ENCODE measurements at regions of chr19 and their contacts with region 1.

Region 1: GRCh38 chr19:17859533-17860330 is at the start of gene RPL18A:
- DNase-seq: peak; percentile 100
- H3K4me3 ChIP-seq: peak within 1 kb of the TSS; percentile 77 to 99 (median 86)
- H3K27ac ChIP-seq: peak within 1 kb of the TSS; percentile 85 to 95 (median 90)
- H3K4me1 ChIP-seq: peaks cover 19 to 39% (median 30%) of the 10 kb centered on the region in 4 donors
- H3K27me3 ChIP-seq: no peaks in the 10 kb centered on the region
- CTCF ChIP-seq: peak; percentile 86 to 95 (median 87)
- EP300 ChIP-seq: no peak
- POLR2A ChIP-seq: peak; percentile 99
- total RNA-seq, gene RPL18A: 1,042 to 1,624 (median 1,374) TPM

Region 2: GRCh38 chr19:17703824-17704463 is 155.8 kb before region 1 on chr19:
- intact Hi-C with region 1: loop called (anchors 10 kb)
- DNase-seq: no peak
- H3K4me3 ChIP-seq: no peak overlapping the region
- H3K27ac ChIP-seq: no peak overlapping the region
- H3K4me1 ChIP-seq: no peaks in the 10 kb centered on the region
- H3K27me3 ChIP-seq: peaks cover 0 to 79% (median 0%) of the 10 kb centered on the region in 4 donors
- CTCF ChIP-seq: peak; percentile 78 to 87 (median 79)
- EP300 ChIP-seq: no peak
- POLR2A ChIP-seq: no peak

Region 3: DNA sequence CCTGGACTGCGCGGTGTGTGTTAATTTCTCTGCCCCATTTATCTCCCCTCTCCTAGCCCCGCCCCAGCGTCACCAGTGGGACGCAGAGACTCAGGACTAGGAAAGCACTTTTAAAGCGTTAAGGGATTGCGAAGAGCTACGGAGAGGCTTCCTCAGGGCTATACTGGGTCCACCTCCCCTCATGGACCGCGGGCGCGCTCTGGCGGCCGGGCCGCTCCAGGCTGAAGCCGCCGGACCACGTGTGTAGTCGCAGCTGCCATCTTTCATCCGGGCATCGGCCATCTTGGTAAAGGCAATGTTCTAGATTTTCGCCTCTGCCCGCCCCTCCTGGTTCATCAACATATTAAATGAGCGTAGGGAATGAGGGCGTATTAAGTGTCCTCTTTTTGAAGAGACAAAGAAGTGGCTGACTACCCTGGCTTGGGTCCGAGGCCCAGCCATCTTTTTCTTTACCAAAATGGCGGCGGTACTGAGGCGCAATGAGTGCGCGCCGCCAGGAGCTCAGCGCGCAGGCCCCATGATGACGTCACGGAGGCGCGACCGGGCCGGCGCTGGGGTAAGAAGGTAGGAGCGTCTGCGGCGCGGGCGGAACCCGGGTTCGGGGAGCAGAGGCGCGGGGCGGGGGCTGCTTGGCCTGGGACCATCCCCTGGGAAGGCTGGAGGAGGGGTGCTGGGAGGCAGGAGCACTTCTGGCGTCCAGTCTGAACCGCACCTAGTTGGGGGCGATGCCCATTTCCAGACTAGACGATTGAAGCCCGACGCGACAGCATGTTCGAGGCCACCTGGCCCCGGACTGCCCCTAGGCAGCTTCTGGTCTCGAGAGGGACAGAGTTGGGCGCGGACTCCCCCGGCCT is 73.0 kb after region 1 on chr19 and contains the start of gene CCDC124:
- intact Hi-C with region 1: loop called (anchors 2 kb)
- DNase-seq: peak; percentile 97
- H3K4me3 ChIP-seq: peak within 1 kb of the TSS; percentile 85 to 96 (median 89)
- H3K27ac ChIP-seq: peak within 1 kb of the TSS; percentile 83 to 88 (median 87)
- H3K4me1 ChIP-seq: peaks cover 19 to 26% (median 25%) of the 10 kb centered on the region in 4 donors
- H3K27me3 ChIP-seq: peaks cover 0 to 6% (median 0%) of the 10 kb centered on the region in 4 donors
- CTCF ChIP-seq: peak; percentile 70 to 89 (median 73)
- EP300 ChIP-seq: no peak
- POLR2A ChIP-seq: peak; percentile 84
- total RNA-seq, gene CCDC124: 51.2 to 97.4 (median 74.3) TPM

Region 4: GRCh38 chr19:17996826-17997316 is 137.1 kb after region 1 on chr19:
- intact Hi-C with region 1: loop called (anchors 2 kb)
- DNase-seq: peak; percentile 96
- H3K4me3 ChIP-seq: no peak overlapping the region
- H3K27ac ChIP-seq: no peak overlapping the region
- H3K4me1 ChIP-seq: peaks cover 7 to 23% (median 17%) of the 10 kb centered on the region in 4 donors
- H3K27me3 ChIP-seq: peaks cover 0 to 15% (median 0%) of the 10 kb centered on the region in 4 donors
- CTCF ChIP-seq: peak; percentile 98 to 99 (median 99)
- EP300 ChIP-seq: no peak
- POLR2A ChIP-seq: no peak

Measured in esophagus muscularis mucosa (tissue), 4 donors.